H1 (cell line): ENCODE measurements at regions of chr2 and their contacts with region 1.

Region 1: DNA sequence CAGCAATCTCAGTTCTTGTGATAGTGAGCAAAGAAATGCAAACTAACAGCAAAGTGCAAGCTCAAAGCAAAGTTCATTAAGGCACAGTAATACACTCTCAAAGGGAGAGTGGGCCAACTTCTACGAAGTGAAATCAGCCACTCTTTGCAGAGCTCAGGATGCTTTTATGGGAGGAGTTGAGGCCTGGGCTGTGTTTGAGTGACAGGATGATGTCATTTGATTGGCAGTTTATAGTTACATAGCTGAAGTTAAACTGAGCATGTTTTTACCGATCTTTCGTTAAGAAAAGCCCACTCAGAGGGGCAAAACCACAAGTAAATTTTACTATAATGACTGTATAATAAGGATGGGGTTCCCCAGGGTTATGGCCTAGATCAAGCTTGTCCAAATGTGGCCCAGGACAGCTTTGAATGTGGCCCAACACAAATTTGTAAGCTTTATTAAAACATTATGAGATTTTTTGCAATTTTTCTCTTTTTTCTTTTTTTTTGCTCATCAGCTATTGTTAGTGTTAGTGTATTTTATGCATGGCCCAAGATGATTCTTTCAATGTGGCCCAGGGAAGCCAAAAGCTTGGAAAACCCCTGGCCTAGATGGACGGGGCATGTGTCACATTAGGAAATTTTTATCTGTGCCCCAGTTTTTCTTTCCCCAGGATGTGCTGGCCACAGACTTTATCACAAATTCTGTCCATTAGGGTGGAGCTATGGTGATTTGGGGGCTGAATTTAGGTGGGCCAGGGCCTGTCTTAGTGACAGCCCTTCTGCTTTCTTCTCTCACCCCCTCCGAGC is 8.3 kb upstream of the DNAH7 start:
- DNase-seq: no peak
- H3K4me3 ChIP-seq: no peak overlapping the region
- H3K27ac ChIP-seq: no peak overlapping the region
- H3K4me1 ChIP-seq: no peaks in the 10 kb centered on the region; a peak in 1 of 7 replicates
- H3K27me3 ChIP-seq: no peaks in the 10 kb centered on the region
- CTCF ChIP-seq: no peak
- EP300 ChIP-seq: no peak
- POLR2A ChIP-seq: no peak
- RAD21 ChIP-seq: no peak

Region 2: GRCh38 chr2:196108604-196109003 is 31.6 kb after region 1 on chr2:
- CTCF ChIA-PET with region 1: interaction called, 11 read pairs
- POLR2A ChIA-PET with region 1: no interaction called
- DNase-seq: no peak
- H3K4me3 ChIP-seq: no peak overlapping the region
- H3K27ac ChIP-seq: no peak overlapping the region
- H3K4me1 ChIP-seq: peaks cover 0 to 11% (median 8%) of the 10 kb centered on the region in 4 experiments; a peak in 6 of 7 replicates
- H3K27me3 ChIP-seq: no peaks in the 10 kb centered on the region
- CTCF ChIP-seq: no peak
- EP300 ChIP-seq: no peak
- POLR2A ChIP-seq: no peak
- RAD21 ChIP-seq: no peak

Region 3: DNA sequence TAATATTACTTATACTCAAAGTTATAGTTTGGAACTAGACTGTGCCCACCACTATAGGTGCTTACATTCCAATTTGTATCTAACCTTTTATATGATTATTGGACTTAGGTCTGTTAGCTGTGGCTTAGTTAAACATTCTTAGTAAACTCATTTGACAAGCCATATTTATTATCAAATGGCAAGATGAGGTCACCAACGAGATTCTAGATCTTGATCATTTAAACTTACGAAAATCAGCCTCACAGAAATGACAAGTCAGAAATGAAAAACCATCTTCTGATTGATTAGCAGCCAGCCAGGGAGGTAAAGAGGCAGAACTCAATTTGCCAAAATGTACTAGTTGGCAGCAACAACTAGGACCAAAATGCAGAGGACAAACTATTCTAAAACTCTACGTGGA is 194.8 kb after region 1 on chr2:
- CTCF ChIA-PET with region 1: interaction called, 84 read pairs
- POLR2A ChIA-PET with region 1: no interaction called
- DNase-seq: no peak
- H3K4me3 ChIP-seq: no peak overlapping the region
- H3K27ac ChIP-seq: no peak overlapping the region
- H3K4me1 ChIP-seq: no peaks in the 10 kb centered on the region
- H3K27me3 ChIP-seq: no peaks in the 10 kb centered on the region
- CTCF ChIP-seq: no peak
- EP300 ChIP-seq: no peak
- POLR2A ChIP-seq: no peak
- RAD21 ChIP-seq: no peak

Region 4: GRCh38 chr2:196291873-196292800 is 215.2 kb after region 1 on chr2:
- CTCF ChIA-PET with region 1: interaction called, 12 read pairs
- POLR2A ChIA-PET with region 1: no interaction called
- DNase-seq: no peak
- H3K4me3 ChIP-seq: no peak overlapping the region
- H3K27ac ChIP-seq: no peak overlapping the region; the same call in 1 of the 2 replicates
- H3K4me1 ChIP-seq: no peaks in the 10 kb centered on the region
- H3K27me3 ChIP-seq: no peaks in the 10 kb centered on the region
- CTCF ChIP-seq: no peak
- EP300 ChIP-seq: no peak
- POLR2A ChIP-seq: no peak
- RAD21 ChIP-seq: no peak

Region 5: DNA sequence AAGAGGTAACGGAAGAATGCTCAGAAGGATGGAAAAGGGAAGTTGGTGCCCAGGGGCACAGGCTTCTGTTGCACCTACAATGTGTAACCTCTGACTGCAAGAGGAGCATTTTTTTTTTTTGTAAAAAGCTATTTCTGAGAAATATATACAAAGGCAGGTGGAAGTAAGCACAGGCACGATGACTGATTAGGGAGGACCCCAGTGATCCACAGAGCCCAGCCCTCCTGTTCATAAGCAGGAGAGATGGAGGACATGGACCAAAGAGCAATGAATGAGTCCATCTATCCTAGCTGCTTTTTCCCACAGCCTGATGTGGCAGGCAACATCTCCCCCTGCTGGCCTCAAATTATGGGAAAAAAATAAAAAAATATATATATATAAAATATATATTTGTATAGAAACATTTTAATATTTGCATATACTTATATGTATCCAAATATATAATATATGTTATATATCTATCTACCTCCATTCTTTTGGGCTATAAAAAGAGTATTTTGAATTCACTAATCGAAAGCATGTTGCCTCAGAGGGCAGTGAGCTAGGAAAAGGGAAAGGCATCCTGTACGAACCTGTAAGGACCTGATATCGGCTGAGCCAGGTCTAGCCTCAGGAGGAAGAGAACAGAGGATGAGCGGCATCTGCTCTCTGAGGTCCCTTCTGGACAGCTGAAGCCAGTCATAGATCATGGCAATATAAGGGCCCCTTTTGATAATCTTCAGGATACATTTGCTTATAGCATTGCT is 260.4 kb after region 1 on chr2:
- CTCF ChIA-PET with region 1: interaction called, 54 read pairs
- POLR2A ChIA-PET with region 1: no interaction called
- DNase-seq: no peak
- H3K4me3 ChIP-seq: no peak overlapping the region
- H3K27ac ChIP-seq: no peak overlapping the region
- H3K4me1 ChIP-seq: no peaks in the 10 kb centered on the region
- H3K27me3 ChIP-seq: no peaks in the 10 kb centered on the region
- CTCF ChIP-seq: peak in 2 of 3 experiments; percentile 29 to 46; a peak in 2 of 4 replicates
- EP300 ChIP-seq: no peak
- POLR2A ChIP-seq: no peak
- RAD21 ChIP-seq: peak; percentile 64 to 65